GM13977 (cell line): ENCODE measurements at regions of chr3 and their contacts with region 1.

Region 1: GRCh38 chr3:38479431-38480092 is 16.6 kb upstream of the EXOG start:
- DNase-seq: peak; percentile 84
- CTCF ChIP-seq: peak; percentile 89

Region 2: DNA sequence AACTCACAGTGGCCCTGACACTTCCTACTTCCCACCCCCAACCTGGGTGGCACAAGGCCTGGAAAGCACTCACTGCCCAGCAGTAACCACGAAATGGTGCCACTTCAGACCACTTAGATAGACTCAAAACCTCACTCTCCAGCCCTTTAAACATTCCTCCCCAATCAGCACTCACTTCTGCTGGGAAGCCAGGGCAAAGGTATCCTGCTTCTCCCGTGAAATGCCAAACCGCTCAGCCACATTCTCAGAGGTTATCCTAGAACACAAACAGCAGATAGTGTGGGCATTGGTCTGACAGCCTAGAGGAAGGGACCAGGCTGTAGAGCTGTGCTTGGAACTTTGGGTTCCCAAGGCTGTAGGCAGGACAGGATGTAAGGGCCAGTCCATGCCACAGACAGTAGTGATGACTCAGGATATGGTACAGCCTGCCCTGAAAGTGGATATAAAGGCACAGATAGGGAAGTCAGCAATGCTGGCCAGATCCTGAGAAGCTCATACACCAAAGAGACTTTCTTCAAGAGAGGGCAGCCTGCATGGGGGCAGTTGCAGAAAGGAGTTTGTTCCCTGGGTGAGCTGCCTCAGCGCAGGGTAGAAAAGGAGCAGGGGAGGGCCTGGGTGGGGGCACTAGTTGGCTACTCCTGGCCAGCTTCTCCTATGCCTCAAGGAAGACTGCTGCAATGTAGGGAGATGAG is 351.8 kb before region 1 on chr3:
- in situ Hi-C with region 1: loop called (anchors 10 kb)
- DNase-seq: no peak
- CTCF ChIP-seq: no peak

Region 3: GRCh38 chr3:38829404-38829803 is 349.8 kb after region 1 on chr3:
- in situ Hi-C with region 1: no loop called
- DNase-seq: no peak
- CTCF ChIP-seq: no peak